Caco-2 (cell line): ENCODE measurements at regions of chr1 and their contacts with region 1.

Region 1: DNA sequence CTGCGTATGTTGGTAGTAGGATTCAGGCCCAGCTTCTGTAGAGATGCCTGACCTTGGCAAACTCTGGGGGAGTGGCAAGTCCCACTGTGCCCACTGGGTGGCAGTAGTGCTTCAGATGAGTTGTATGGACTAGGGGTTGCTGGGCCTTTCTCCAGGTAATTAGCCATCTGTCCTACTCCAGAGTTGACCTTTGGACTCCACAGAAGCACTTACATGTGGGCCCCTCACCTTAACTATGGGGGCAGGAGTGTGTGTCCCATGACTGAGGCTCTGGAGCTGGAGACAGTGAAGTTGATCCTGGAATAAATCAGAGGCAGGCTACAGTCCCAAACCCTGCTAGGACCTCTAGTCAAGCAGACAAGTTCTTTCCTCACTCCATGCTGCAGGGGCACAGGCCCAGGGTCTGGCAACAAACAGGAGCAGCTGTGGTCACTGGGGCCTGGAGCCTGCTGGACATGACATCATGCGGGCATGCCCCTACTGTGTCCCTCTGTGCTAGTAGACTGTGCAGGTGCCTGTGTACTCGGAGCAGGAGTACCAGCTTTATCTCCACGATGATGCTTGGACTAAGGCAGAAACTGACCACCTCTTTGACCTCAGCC is 4.6 kb downstream of the DMAP1 start:
- DNase-seq: peak; percentile 87
- H3K4me3 ChIP-seq: no peak overlapping the region
- H3K4me3 Mint-ChIP-seq: no peak overlapping the region
- H3K27ac Mint-ChIP-seq: peak overlapping the region; percentile 1
- H3K4me1 ChIP-seq: peaks cover 6% of the 10 kb centered on the region
- H3K4me1 Mint-ChIP-seq: peaks cover 7% of the 10 kb centered on the region
- H3K27me3 ChIP-seq: no peaks in the 10 kb centered on the region
- H3K27me3 Mint-ChIP-seq: no peaks in the 10 kb centered on the region
- CTCF ChIP-seq: peak; percentile 81 to 86

Region 2: GRCh38 chr1:44170281-44170823 is 47.6 kb before region 1 on chr1:
- CTCF ChIA-PET with region 1: no interaction called
- POLR2A ChIA-PET with region 1: no interaction called
- intact Hi-C with region 1: no loop called
- DNase-seq: no peak
- H3K4me3 ChIP-seq: no peak overlapping the region
- H3K4me3 Mint-ChIP-seq: no peak overlapping the region
- H3K27ac Mint-ChIP-seq: no peak overlapping the region
- H3K4me1 ChIP-seq: no peaks in the 10 kb centered on the region
- H3K4me1 Mint-ChIP-seq: peaks cover 4% of the 10 kb centered on the region
- H3K27me3 ChIP-seq: no peaks in the 10 kb centered on the region
- H3K27me3 Mint-ChIP-seq: peaks cover 3% of the 10 kb centered on the region
- CTCF ChIP-seq: no peak

Region 3: GRCh38 chr1:44294588-44295007 is 76.7 kb after region 1 on chr1:
- CTCF ChIA-PET with region 1: interaction called, 21 read pairs
- POLR2A ChIA-PET with region 1: interaction called, 3 read pairs
- intact Hi-C with region 1: loop called (anchors 1 kb)
- DNase-seq: peak; percentile 50
- H3K4me3 ChIP-seq: no peak overlapping the region
- H3K4me3 Mint-ChIP-seq: no peak overlapping the region
- H3K27ac Mint-ChIP-seq: no peak overlapping the region
- H3K4me1 ChIP-seq: no peaks in the 10 kb centered on the region
- H3K4me1 Mint-ChIP-seq: no peaks in the 10 kb centered on the region
- H3K27me3 ChIP-seq: no peaks in the 10 kb centered on the region
- H3K27me3 Mint-ChIP-seq: no peaks in the 10 kb centered on the region
- CTCF ChIP-seq: peak; percentile 39 to 76

Region 4: GRCh38 chr1:44318097-44319088 is 100.5 kb after region 1 on chr1:
- CTCF ChIA-PET with region 1: interaction called, 3 read pairs
- POLR2A ChIA-PET with region 1: no interaction called
- intact Hi-C with region 1: loop called (anchors 1 kb)
- DNase-seq: peak in 1 of 2 experiments; percentile 52
- H3K4me3 ChIP-seq: no peak overlapping the region
- H3K4me3 Mint-ChIP-seq: no peak overlapping the region
- H3K27ac Mint-ChIP-seq: no peak overlapping the region
- H3K4me1 ChIP-seq: no peaks in the 10 kb centered on the region
- H3K4me1 Mint-ChIP-seq: no peaks in the 10 kb centered on the region
- H3K27me3 ChIP-seq: no peaks in the 10 kb centered on the region
- H3K27me3 Mint-ChIP-seq: no peaks in the 10 kb centered on the region
- CTCF ChIP-seq: peak; percentile 61 to 66

Region 5: GRCh38 chr1:44361478-44361877 is 143.6 kb after region 1 on chr1:
- CTCF ChIA-PET with region 1: no interaction called
- POLR2A ChIA-PET with region 1: no interaction called
- intact Hi-C with region 1: loop called (anchors 5 kb)
- DNase-seq: peak in 1 of 2 experiments; percentile 20
- H3K4me3 ChIP-seq: no peak overlapping the region
- H3K4me3 Mint-ChIP-seq: no peak overlapping the region
- H3K27ac Mint-ChIP-seq: no peak overlapping the region
- H3K4me1 ChIP-seq: no peaks in the 10 kb centered on the region
- H3K4me1 Mint-ChIP-seq: no peaks in the 10 kb centered on the region
- H3K27me3 ChIP-seq: no peaks in the 10 kb centered on the region
- H3K27me3 Mint-ChIP-seq: peaks cover 2% of the 10 kb centered on the region
- CTCF ChIP-seq: peak; percentile 18 to 44

Region 6: DNA sequence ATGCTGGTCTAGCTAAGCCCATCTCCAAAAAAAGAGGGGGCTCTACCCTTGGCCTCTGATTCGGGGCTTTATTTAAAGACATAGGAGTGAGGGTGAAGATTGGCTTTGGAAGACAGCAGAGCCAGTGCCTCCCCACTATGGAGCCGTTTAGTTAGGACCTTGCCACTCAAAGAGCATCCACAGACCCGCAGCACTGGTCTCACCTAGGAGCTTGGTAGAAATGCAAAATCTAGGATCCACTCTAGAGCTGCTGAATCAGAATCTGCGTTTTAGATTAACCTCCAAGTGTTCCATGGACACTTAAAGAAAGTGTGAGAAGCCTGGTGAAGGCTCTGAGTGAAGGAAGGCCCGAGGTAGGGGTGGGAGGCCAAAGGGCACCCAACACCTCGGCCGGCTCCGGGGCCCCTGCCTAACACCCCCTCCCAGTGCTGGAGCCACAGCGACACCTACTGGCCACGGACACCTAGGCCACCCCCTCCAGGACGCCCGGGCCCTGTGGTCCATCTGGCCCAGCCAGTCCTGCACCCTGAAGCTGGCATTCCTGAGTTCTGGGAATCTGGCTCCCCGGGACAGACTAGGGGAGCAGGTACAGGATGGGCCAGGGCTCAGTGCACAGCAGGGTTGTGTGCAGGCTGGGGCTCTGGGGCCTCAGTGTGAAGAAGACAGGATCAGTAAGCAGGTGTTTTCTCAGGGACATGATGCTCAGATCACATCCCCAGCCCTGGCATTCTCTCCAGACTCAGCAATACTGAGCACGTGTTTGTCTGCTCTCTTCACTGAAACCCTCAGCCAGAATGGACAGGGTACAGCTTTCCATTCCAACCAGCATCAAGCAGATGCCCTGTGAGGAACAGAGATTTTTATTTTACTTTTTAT is 377.2 kb after region 1 on chr1:
- CTCF ChIA-PET with region 1: interaction called, 4 read pairs
- POLR2A ChIA-PET with region 1: no interaction called
- intact Hi-C with region 1: loop called (anchors 5 kb)
- DNase-seq: peak; percentile 78 to 84
- H3K4me3 ChIP-seq: no peak overlapping the region
- H3K4me3 Mint-ChIP-seq: no peak overlapping the region
- H3K27ac Mint-ChIP-seq: no peak overlapping the region
- H3K4me1 ChIP-seq: peaks cover 5% of the 10 kb centered on the region; the same call in 1 of the 2 replicates
- H3K4me1 Mint-ChIP-seq: no peaks in the 10 kb centered on the region
- H3K27me3 ChIP-seq: no peaks in the 10 kb centered on the region
- H3K27me3 Mint-ChIP-seq: peaks cover 7% of the 10 kb centered on the region
- CTCF ChIP-seq: peak; percentile 88 to 94

Region 7: DNA sequence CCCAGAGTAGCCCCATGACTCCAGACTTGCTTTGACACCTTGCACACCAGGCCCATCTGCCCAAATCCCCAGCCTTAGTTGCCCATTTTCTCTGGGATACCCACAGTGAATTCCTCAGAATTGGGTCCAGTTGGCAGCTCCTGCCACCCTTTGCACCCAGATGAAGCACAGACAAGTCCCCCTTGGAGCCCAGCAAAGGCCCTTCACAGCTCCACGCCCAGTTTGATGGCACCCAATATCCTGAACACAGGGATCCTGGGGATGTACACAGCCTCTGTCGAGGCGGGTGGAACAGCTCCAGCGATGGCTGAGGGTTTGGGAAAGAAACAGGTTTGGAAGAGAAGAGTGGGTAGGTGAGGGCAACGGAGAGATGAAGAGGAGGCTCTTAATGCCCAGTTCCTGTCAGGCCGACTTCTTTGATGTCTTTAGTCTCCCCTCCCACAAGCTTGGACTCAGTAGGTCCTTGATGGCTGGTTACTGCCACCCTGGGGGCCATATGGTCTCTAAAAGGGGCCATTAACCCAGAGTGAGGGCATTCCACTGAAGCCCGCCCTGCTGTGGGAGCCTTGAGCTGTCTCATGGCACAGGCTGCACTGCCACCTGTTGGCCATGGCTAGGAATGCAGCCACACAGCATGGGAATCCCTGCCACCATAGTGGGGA is 434.7 kb after region 1 on chr1:
- CTCF ChIA-PET with region 1: interaction called, 6 read pairs
- POLR2A ChIA-PET with region 1: no interaction called
- intact Hi-C with region 1: loop called (anchors 5 kb)
- DNase-seq: peak; percentile 62 to 75
- H3K4me3 ChIP-seq: no peak overlapping the region
- H3K4me3 Mint-ChIP-seq: no peak overlapping the region
- H3K27ac Mint-ChIP-seq: no peak overlapping the region
- H3K4me1 ChIP-seq: no peaks in the 10 kb centered on the region
- H3K4me1 Mint-ChIP-seq: no peaks in the 10 kb centered on the region
- H3K27me3 ChIP-seq: no peaks in the 10 kb centered on the region
- H3K27me3 Mint-ChIP-seq: no peaks in the 10 kb centered on the region
- CTCF ChIP-seq: peak; percentile 80 to 90